ENCODE measurements at regions of chrX and their contacts with region 1.

Region 1: DNA sequence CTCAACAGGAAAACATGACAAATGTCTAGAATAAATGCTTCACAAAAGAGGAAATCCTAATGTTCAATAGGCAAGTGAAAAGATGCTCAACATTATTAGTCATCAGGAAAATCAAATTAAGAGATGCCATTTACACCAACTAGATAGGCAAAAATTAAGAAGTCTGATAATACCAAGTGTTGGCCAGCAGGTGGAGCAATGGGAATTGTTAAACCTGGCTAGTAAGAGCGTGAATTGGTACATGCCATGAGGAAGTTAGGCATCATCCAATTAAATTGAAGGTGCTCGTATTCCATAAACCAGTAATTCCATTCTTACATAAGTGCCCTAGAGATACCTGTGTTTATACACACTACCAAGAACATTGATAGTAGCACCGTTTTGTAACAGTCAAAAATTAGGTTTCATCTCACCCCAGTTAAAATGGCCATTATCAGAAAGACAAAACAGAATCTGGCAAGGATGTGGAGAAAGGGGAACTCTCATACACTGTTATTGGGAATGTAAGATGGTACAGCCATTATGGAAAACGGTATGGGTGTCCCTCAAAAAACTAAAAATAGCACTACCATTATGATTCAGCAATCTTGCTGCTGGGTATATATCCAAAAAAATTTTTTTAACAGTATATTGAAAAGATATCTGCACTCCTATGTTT is 14.0 kb upstream of the ZCCHC18 start:
- DNase-seq: peak; percentile 36
- H3K4me3 Mint-ChIP-seq: no peak overlapping the region
- H3K27ac Mint-ChIP-seq: no peak overlapping the region
- H3K4me1 Mint-ChIP-seq: peaks cover 2% of the 10 kb centered on the region
- H3K27me3 Mint-ChIP-seq: no peaks in the 10 kb centered on the region

Region 2: GRCh38 chrX:104007242-104007641 is 91.0 kb before region 1 on chrX:
- CTCF ChIA-PET with region 1: no interaction called
- POLR2A ChIA-PET with region 1: no interaction called
- DNase-seq: no peak
- H3K4me3 Mint-ChIP-seq: no peak overlapping the region
- H3K27ac Mint-ChIP-seq: no peak overlapping the region
- H3K4me1 Mint-ChIP-seq: no peaks in the 10 kb centered on the region
- H3K27me3 Mint-ChIP-seq: peaks cover 3% of the 10 kb centered on the region

Region 3: DNA sequence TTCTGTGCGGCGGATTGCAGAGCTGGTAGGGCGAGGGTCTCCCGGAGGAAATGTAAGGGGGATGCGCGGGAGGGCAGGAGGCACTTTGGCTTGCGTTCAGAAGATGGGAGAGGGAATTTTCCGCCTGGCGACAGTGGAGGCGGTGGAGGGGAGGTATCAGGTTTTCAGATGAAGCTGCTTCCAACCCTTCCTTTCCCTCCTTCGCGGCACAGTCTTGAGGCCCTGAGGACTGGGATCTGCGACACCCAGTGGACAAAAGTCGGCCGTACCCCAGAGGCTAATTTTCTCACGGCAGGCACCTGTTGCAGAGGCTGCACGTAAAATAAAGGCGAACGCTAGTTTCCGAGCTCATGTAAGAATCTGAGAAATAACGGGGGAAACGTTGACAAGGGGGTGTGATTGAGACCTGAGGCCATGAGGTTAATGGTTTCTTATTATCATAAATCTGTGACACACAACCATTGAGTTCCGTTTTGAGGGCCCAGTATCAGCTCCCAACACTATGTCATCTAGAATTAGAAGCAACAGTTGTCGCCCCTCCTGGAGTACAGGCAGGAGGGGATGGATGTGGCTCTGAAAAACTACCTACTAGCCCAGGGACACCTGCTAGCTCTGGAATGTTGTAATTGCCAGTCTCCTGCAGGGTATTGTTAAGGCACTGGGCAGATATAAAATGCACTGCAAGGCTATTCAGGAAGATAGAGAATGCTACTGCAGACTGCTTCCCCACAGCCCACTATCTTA is 15.1 kb after region 1 on chrX:
- CTCF ChIA-PET with region 1: interaction called, 26 read pairs
- POLR2A ChIA-PET with region 1: interaction called, 3 read pairs
- DNase-seq: peak; percentile 61
- H3K4me3 Mint-ChIP-seq: peak overlapping the region; percentile 77
- H3K27ac Mint-ChIP-seq: no peak overlapping the region
- H3K4me1 Mint-ChIP-seq: peaks cover 52% of the 10 kb centered on the region
- H3K27me3 Mint-ChIP-seq: peaks cover 3% of the 10 kb centered on the region

Region 4: GRCh38 chrX:104136241-104137019 is 38.1 kb after region 1 on chrX:
- CTCF ChIA-PET with region 1: interaction called, 26 read pairs
- POLR2A ChIA-PET with region 1: no interaction called
- DNase-seq: peak; percentile 44
- H3K4me3 Mint-ChIP-seq: no peak overlapping the region
- H3K27ac Mint-ChIP-seq: no peak overlapping the region
- H3K4me1 Mint-ChIP-seq: peaks cover 15% of the 10 kb centered on the region
- H3K27me3 Mint-ChIP-seq: no peaks in the 10 kb centered on the region

Region 5: GRCh38 chrX:104189837-104190236 is 91.6 kb after region 1 on chrX:
- CTCF ChIA-PET with region 1: no interaction called
- POLR2A ChIA-PET with region 1: no interaction called
- DNase-seq: no peak
- H3K4me3 Mint-ChIP-seq: no peak overlapping the region
- H3K27ac Mint-ChIP-seq: no peak overlapping the region
- H3K4me1 Mint-ChIP-seq: peaks cover 3% of the 10 kb centered on the region
- H3K27me3 Mint-ChIP-seq: no peaks in the 10 kb centered on the region

Measured in activated CD4-positive, alpha-beta memory T cell treated with anti-CD3 and anti-CD28 coated beads, Interleukin-2, amount 10 ng/mL, durations not matched to agents 7 days and 5 days (primary cell).